ENCODE measurements at regions of chr12 and their contacts with region 1.

Region 1: DNA sequence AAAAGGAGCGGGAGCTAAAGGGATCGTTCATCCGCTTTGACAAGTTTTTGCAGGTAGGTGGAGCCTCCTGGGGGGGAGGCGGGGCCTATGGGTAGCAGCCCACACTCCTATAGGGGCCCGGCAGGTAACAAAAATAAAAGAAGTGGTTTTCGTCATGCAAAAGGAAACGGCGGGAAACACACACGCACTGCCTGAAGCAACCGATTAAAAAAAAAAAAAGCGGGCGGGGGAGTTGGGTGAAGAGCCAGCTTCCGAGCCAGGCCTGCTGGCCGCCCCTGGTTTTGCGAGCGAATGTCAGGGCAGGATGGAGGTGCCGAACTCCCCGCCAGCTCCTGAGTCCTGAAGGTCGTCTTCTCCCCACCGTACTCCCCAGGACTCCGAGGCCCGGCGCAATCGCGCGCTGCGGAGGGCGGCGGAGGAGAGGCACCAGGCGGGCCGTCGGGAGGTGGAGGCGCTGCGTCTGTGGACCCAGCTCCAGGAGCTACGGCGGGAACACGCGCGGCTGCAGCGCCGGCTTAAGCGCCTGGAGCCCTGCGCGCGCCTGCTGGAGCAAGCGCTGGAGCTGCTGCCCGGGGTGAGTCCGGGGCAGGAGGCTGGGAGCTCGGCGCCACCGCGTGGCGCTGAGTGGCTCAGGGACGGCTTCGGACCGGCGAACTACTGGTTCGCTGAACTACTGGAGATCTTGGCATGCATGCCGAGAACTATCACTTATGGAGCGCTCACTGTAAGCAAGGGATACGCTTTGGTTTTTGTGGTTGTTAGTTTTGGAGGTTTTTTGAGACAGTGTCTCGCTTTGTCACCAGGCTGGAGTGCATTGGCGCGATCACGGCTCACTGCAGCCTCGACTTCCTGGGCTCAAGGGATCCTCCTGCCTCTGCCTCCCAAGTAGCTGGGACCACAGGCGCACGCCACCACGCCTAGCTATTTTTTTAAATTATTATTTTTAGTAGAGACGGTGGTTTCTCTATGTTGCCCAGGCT is 3.6 kb downstream of the CFAP73 start:
- DNase-seq: peak; percentile 45 to 72
- ATAC-seq: peak; percentile 77 to 86 (median 82)
- H3K4me3 ChIP-seq: peak overlapping the region; percentile 7 to 52 (median 40)
- H3K27ac ChIP-seq: no peak overlapping the region
- H3K4me1 ChIP-seq: peaks cover 3 to 30% (median 23%) of the 10 kb centered on the region in 9 donors
- H3K27me3 ChIP-seq: peaks cover 10 to 76% (median 69%) of the 10 kb centered on the region in 7 donors
- CTCF ChIP-seq: peak in 8 of 9 donors; percentile 3 to 67 (median 56)

Region 2: GRCh38 chr12:112430929-112431328 is 722.2 kb before region 1 on chr12:
- intact Hi-C with region 1: no loop called
- DNase-seq: no peak
- ATAC-seq: no peak
- H3K4me3 ChIP-seq: no peak overlapping the region
- H3K27ac ChIP-seq: no peak overlapping the region
- H3K4me1 ChIP-seq: peaks cover 0 to 8% (median under 1%) of the 10 kb centered on the region in 9 donors
- H3K27me3 ChIP-seq: no peaks in the 10 kb centered on the region
- CTCF ChIP-seq: no peak

Region 3: GRCh38 chr12:113103756-113104450 is 49.2 kb before region 1 on chr12:
- intact Hi-C with region 1: no loop called
- DNase-seq: no peak
- ATAC-seq: no peak
- H3K4me3 ChIP-seq: peak overlapping the region in 1 of 10 donors; percentile 5
- H3K27ac ChIP-seq: no peak overlapping the region
- H3K4me1 ChIP-seq: peaks cover 0 to 7% (median 0%) of the 10 kb centered on the region in 9 donors
- H3K27me3 ChIP-seq: peaks cover 5 to 58% (median 42%) of the 10 kb centered on the region in 7 donors
- CTCF ChIP-seq: no peak

Region 4: DNA sequence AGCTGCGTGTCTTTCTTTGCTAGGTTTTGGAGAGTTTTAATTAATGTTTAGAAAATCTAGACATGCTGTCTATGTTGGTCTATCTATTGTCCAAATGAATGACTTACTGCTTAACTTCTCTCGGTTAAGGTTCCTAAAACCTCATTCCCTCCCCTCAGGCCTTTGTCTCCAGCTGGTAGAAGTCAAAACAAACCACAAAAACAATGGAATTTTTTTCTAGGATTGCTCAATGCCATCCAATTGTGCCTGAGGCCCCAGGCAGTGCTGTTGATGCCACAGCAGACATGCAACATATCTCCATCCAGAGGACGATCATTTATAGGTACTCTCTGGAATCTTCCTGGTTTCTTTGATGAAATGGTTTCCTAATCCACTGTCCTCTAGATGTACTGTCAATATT is 1979.0 kb after region 1 on chr12:
- intact Hi-C with region 1: loop called in 1 of 10 experiments (anchors 5 kb)
- DNase-seq: no peak
- ATAC-seq: no peak
- H3K4me3 ChIP-seq: no peak overlapping the region
- H3K27ac ChIP-seq: no peak overlapping the region
- H3K4me1 ChIP-seq: peaks cover 0 to 13% (median 0%) of the 10 kb centered on the region in 9 donors
- H3K27me3 ChIP-seq: no peaks in the 10 kb centered on the region
- CTCF ChIP-seq: no peak

Measured in heart right ventricle (tissue), 16 donors.